Activated CD4-positive, alpha-beta T cell treated with anti-CD3 and anti-CD28 coated beads for 36 hours (primary cell): ENCODE measurements at regions of chr19 and their contacts with region 1.

Region 1: DNA sequence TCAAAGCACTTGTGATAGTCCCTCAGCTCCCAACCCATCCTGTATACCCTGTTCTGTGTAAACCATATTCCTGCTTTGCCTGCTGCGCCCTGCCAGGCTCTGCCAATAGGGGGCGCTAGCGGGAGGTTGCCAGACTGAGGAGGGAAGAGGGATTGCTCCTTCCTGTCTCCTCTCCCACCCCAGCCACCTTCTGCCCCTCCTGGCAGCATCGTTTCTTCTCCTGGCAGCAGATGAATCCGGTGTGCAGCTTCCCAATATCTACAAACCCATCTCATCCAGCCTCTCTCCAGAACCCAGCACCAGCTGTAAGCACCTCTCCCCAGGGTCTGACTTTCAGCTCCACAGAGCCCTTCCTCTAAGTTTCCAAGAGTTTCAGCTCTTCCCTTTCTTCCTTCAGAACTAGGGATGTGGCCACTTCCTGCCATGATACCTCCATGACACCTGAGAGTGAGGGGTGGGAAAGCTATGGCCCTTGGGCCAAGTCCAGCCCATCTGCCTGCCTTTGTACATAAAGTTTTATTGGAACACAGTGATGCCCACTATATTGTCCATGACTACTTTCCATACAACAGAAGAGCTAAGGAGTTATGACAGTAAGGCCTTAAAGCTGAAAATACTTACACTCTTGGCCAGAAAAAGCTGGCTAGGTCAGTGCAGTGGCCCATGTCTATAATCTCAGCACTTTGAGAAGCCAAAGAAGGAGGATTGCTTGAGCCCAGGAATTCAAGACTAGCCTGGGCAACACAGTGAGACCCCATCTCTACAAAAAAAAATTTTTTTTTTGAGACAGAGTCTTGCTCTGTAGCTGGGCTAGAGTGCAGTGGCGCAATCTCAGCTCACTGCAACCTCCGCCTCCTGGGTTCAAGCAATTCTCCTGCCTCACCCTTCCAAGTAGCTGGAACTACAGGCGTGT is 34.5 kb upstream of the ATP1A3 start:
- DNase-seq: peak; percentile 67
- ATAC-seq: no peak
- H3K4me3 Mint-ChIP-seq: no peak overlapping the region
- H3K27ac Mint-ChIP-seq: no peak overlapping the region
- H3K4me1 Mint-ChIP-seq: no peaks in the 10 kb centered on the region
- H3K27me3 Mint-ChIP-seq: peaks cover 2% of the 10 kb centered on the region

Region 2: GRCh38 chr19:41959056-41960053 is 69.2 kb before region 1 on chr19 and contains the start of gene RABAC1:
- CTCF ChIA-PET with region 1: no interaction called
- POLR2A ChIA-PET with region 1: no interaction called
- intact Hi-C with region 1: loop called in 1 of 2 experiments (anchors 5 kb)
- DNase-seq: peak; percentile 94
- ATAC-seq: peak; percentile 88
- H3K4me3 Mint-ChIP-seq: peak within 1 kb of the TSS; percentile 81
- H3K27ac Mint-ChIP-seq: peak within 1 kb of the TSS; percentile 87
- H3K4me1 Mint-ChIP-seq: peaks cover 16% of the 10 kb centered on the region
- H3K27me3 Mint-ChIP-seq: no peaks in the 10 kb centered on the region
- total RNA-seq, gene RABAC1: 35.3 to 49.7 TPM

Region 3: DNA sequence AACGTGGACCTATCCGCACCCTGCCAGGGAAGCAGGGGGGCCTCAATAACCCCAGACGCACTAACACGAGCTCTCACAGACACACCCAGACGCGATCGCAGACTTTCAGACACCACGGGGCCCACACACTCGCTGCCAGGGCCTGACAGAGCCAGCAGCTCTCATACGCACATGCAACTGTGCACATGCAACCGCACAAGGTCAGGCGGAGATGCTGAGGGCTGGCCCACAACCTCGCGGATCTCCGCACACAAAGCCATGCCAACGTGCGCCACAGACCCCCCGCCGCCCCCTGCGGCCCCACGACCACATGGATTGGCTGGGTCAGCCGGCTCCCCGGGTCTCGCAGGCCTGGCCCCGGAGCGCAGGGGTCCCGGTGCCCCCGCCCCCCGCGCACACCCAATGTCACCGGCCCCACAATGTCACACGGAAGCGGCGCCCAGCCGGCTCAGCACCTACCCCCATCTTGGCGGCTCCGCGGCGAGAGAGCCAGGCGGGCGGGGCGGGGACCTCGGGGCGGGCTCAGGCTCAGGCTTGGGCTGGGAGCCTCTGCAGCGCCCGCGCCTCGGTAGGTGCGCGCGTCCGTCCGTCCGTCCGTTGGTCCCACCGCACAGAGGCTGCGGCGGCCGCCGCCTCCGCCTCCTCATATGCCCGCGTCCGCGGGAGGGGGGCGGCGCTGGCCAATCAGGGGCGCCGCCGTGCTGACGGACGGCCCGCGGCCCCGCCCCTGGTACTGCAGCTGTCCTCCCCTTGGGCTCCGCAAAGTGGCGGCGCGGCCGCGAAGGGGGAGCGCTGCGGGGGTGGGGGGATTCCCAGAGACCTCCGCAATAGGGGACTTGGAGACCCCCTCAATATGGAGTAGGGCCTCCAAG is 34.7 kb before region 1 on chr19 and contains the start of gene ATP1A3:
- CTCF ChIA-PET with region 1: no interaction called
- POLR2A ChIA-PET with region 1: no interaction called
- intact Hi-C with region 1: loop called in 1 of 2 experiments (anchors 5 kb)
- DNase-seq: peak; percentile 74
- ATAC-seq: peak; percentile 78
- H3K4me3 Mint-ChIP-seq: peak within 1 kb of the TSS; percentile 71
- H3K27ac Mint-ChIP-seq: no peak within 1 kb of the TSS
- H3K4me1 Mint-ChIP-seq: peaks cover 26% of the 10 kb centered on the region
- H3K27me3 Mint-ChIP-seq: peaks cover 35% of the 10 kb centered on the region
- total RNA-seq, gene ATP1A3: 1.8 TPM

Region 4: DNA sequence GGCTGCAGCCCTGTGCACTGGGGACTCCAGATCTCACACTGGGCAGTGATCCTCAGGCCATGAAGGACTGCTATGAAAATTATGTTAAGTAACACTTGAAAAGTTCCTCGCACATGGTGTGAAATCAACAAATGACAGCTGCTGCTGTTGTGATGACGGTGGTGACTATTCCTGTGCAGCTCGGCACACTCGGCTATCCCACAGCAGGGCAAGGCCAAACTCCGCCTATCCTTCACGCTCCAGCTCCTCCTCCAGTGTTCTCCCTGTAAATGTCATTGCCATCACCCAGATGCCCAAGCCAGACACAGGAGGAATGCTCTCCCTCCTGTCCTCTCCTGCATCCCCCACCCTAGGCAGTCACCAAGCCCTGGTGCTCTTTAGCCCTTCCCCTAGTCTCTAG is 10.1 kb after region 1 on chr19:
- CTCF ChIA-PET with region 1: interaction called, 23 read pairs
- POLR2A ChIA-PET with region 1: no interaction called
- intact Hi-C with region 1: no loop called
- DNase-seq: no peak
- ATAC-seq: no peak
- H3K4me3 Mint-ChIP-seq: no peak overlapping the region
- H3K27ac Mint-ChIP-seq: no peak overlapping the region
- H3K4me1 Mint-ChIP-seq: no peaks in the 10 kb centered on the region
- H3K27me3 Mint-ChIP-seq: no peaks in the 10 kb centered on the region

Region 5: DNA sequence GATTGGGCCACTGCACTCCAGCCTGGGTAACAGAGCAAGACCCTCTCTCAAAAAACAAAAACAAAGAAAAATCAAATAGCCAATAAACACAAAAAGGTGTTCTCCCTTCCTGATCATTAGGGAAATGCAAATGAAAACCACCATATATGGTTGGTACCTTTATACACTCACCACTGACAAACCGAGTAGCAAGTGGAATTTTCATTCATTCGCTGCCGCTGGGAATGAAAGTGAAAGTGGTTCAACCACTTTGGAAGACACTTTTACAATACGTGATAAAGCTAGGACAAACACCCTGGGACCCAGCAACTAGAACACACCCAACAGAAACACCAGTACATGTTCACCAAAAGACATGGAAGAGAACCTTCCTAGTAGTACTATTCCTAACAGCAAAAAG is 20.4 kb after region 1 on chr19:
- CTCF ChIA-PET with region 1: interaction called, 20 read pairs
- POLR2A ChIA-PET with region 1: no interaction called
- intact Hi-C with region 1: no loop called
- DNase-seq: peak; percentile 34
- ATAC-seq: peak; percentile 9
- H3K4me3 Mint-ChIP-seq: no peak overlapping the region
- H3K27ac Mint-ChIP-seq: peak overlapping the region; percentile 35
- H3K4me1 Mint-ChIP-seq: peaks cover 21% of the 10 kb centered on the region
- H3K27me3 Mint-ChIP-seq: peaks cover 2% of the 10 kb centered on the region

Region 6: DNA sequence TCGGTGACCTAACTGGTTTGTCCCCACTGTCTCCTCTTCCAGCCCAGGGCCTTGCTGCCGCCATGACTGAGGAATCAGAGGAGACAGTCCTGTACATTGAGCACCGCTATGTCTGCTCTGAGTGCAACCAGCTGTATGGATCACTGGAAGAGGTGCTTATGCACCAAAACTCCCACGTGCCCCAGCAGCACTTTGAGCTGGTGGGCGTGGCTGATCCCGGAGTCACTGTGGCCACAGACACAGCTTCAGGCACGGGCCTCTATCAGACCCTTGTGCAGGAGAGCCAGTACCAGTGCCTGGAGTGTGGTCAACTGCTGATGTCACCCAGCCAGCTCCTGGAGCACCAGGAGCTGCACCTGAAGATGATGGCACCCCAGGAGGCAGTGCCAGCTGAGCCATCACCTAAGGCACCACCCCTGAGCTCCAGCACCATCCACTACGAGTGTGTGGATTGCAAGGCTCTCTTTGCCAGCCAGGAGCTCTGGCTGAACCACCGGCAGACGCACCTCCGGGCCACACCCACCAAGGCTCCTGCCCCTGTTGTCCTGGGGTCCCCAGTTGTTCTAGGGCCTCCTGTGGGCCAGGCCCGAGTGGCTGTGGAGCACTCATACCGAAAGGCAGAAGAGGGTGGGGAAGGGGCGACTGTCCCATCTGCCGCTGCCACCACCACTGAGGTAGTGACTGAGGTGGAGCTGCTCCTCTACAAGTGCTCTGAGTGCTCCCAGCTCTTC is 50.1 kb after region 1 on chr19:
- CTCF ChIA-PET with region 1: no interaction called
- POLR2A ChIA-PET with region 1: no interaction called
- intact Hi-C with region 1: no loop called
- DNase-seq: no peak
- ATAC-seq: no peak
- H3K4me3 Mint-ChIP-seq: no peak overlapping the region
- H3K27ac Mint-ChIP-seq: no peak overlapping the region
- H3K4me1 Mint-ChIP-seq: peaks cover 30% of the 10 kb centered on the region
- H3K27me3 Mint-ChIP-seq: no peaks in the 10 kb centered on the region